Activated naive CD4-positive, alpha-beta T cell treated with anti-CD3 and anti-CD28 coated beads for 36 hours (primary cell): ENCODE measurements at regions of chr6 and their contacts with region 1.

Region 1: GRCh38 chr6:30227763-30228487 is 14.7 kb upstream of the TRIM26 start:
- DNase-seq: peak; percentile 41
- H3K4me3 Mint-ChIP-seq: no peak overlapping the region
- H3K27ac Mint-ChIP-seq: peak overlapping the region; percentile 77
- H3K4me1 Mint-ChIP-seq: peaks cover 15% of the 10 kb centered on the region
- H3K27me3 Mint-ChIP-seq: peaks cover 2% of the 10 kb centered on the region

Region 2: DNA sequence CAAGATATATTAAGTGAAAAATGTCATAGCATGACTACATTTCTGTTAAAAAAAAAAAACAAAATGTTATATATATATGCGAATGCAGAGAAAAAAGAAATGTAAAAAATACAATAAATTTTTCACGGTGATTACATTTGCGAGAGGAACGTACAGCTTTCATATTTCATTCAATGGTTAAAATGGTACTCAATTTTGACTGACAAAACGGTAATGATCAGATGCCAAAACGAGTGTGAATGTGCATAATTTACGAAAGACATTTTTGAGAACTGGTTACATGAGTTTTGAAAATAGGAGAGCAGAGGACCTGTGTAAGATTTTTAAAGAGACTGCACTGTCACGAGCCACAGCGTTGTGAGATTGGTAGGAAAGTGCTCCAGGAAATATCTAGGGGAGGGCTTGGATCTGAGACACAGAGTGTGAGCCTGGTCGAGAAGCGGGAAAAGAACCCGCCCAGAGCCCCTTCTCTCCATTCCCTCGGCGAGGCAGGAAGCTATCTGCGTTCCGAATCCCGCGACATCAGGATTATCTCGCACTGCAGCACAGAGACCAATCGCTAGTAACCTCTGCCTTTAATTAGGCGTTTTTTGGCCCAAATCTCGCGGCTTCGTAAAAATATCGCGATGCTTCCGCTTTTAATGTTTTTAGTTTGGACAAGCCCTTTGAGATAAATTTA is 1332.7 kb before region 1 on chr6:
- CTCF ChIA-PET with region 1: no interaction called
- intact Hi-C with region 1: no loop called
- DNase-seq: peak; percentile 98
- H3K4me3 Mint-ChIP-seq: peak overlapping the region; percentile 96
- H3K27ac Mint-ChIP-seq: peak overlapping the region; percentile 100
- H3K4me1 Mint-ChIP-seq: peaks cover 6% of the 10 kb centered on the region
- H3K27me3 Mint-ChIP-seq: peaks cover 3% of the 10 kb centered on the region

Region 3: GRCh38 chr6:29584821-29585220 is 643.1 kb before region 1 on chr6 and contains the start of gene OR2H2:
- CTCF ChIA-PET with region 1: no interaction called
- intact Hi-C with region 1: no loop called
- DNase-seq: no peak
- H3K4me3 Mint-ChIP-seq: no peak within 1 kb of the TSS
- H3K27ac Mint-ChIP-seq: no peak within 1 kb of the TSS
- H3K4me1 Mint-ChIP-seq: no peaks in the 10 kb centered on the region
- H3K27me3 Mint-ChIP-seq: peaks cover 10% of the 10 kb centered on the region
- total RNA-seq, gene OR2H2: not detected

Region 4: GRCh38 chr6:30238174-30238795 is 10.4 kb after region 1 on chr6:
- CTCF ChIA-PET with region 1: interaction called, 16 read pairs
- intact Hi-C with region 1: no loop called
- DNase-seq: peak; percentile 55
- H3K4me3 Mint-ChIP-seq: no peak overlapping the region
- H3K27ac Mint-ChIP-seq: no peak overlapping the region
- H3K4me1 Mint-ChIP-seq: no peaks in the 10 kb centered on the region
- H3K27me3 Mint-ChIP-seq: peaks cover 11% of the 10 kb centered on the region